HCT116 (cell line): ENCODE measurements at regions of chr5 and their contacts with region 1.

Region 1: GRCh38 chr5:923281-923873 is 30.7 kb downstream of the TRIP13 start:
- DNase-seq: peak; percentile 51
- ATAC-seq: peak; percentile 98
- H3K4me3 ChIP-seq: no peak overlapping the region
- H3K27ac ChIP-seq: no peak overlapping the region
- H3K4me1 ChIP-seq: 0 out of 4 replicates have a peak, but pooled peaks cover 0 to 3% of the 10 kb centered on the region in 2 experiments
- H3K27me3 ChIP-seq: no peaks in the 10 kb centered on the region
- CTCF ChIP-seq: peak; percentile 83 to 88 (median 86)
- POLR2A ChIP-seq: no peak
- RAD21 ChIP-seq: peak; percentile 95

Region 2: DNA sequence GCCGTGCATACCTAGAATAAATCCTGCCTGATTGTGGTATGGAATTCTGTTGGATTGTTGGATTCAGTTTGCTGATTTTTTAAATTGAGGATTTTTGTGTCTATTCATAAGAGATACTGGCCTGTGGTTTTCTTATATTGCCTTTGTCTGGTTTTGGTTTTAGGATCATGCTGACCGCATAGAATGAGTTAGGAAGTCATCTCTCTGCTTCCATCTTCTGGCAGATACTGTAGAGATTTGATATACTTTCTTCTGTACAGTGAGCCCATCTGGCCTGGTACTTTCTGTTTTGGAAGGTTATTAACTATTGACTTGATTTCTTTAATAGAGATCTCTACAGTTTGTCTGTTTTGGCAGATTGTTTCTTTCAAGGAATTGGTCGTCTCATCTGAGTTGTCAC is 296.5 kb before region 1 on chr5:
- CTCF ChIA-PET with region 1: no interaction called
- POLR2A ChIA-PET with region 1: no interaction called
- RAD21 ChIA-PET with region 1: no interaction called
- intact Hi-C with region 1: no loop called
- DNase-seq: no peak
- ATAC-seq: no peak
- H3K4me3 ChIP-seq: no peak overlapping the region
- H3K27ac ChIP-seq: no peak overlapping the region
- H3K4me1 ChIP-seq: no peaks in the 10 kb centered on the region
- H3K27me3 ChIP-seq: no peaks in the 10 kb centered on the region
- CTCF ChIP-seq: no peak
- POLR2A ChIP-seq: no peak
- RAD21 ChIP-seq: peak; percentile 14; the same call in 1 of the 2 replicates

Region 3: GRCh38 chr5:657570-657969 is 265.8 kb before region 1 on chr5:
- CTCF ChIA-PET with region 1: no interaction called
- POLR2A ChIA-PET with region 1: no interaction called
- RAD21 ChIA-PET with region 1: no interaction called
- intact Hi-C with region 1: no loop called
- DNase-seq: peak; percentile 23
- ATAC-seq: peak; percentile 86
- H3K4me3 ChIP-seq: no peak overlapping the region
- H3K27ac ChIP-seq: peak overlapping the region; percentile 44; the same call in 1 of the 2 replicates
- H3K4me1 ChIP-seq: peaks cover 3 to 13% of the 10 kb centered on the region in 2 experiments; a peak in 3 of 4 replicates
- H3K27me3 ChIP-seq: no peaks in the 10 kb centered on the region
- CTCF ChIP-seq: no peak
- POLR2A ChIP-seq: no peak
- RAD21 ChIP-seq: no peak

Region 4: DNA sequence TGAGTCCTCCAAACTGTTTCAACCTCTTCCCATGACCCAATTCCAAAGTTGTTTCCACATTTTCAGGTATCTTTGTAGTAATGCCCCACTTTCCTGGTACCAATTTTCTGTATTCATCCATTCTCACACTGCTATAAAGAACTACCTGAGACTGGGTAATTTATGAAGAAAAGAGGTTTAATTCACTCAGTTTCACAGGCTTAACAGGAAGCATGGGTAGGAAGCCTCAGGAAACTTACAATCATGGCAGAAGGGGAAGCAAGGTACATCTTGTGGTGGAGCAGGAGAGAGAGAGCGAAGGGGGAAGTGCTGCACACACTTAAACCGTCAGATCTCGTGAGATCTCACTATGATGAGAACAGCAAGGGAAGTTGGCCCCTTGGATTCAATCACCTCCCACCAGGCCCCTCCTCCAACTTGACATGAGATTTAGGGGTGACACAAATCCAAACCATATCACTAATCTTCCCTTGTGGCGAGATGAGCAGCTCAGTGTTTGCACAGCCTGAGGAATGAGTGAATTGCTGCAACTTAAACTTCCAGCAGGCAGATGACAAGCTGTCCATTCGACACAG is 12.2 kb after region 1 on chr5:
- CTCF ChIA-PET with region 1: interaction called, 11 read pairs
- POLR2A ChIA-PET with region 1: no interaction called
- RAD21 ChIA-PET with region 1: no interaction called
- intact Hi-C with region 1: no loop called
- DNase-seq: no peak
- ATAC-seq: no peak
- H3K4me3 ChIP-seq: no peak overlapping the region
- H3K27ac ChIP-seq: no peak overlapping the region
- H3K4me1 ChIP-seq: no peaks in the 10 kb centered on the region
- H3K27me3 ChIP-seq: peaks cover 15% of the 10 kb centered on the region; the same call in 1 of the 2 replicates
- CTCF ChIP-seq: no peak
- POLR2A ChIP-seq: no peak
- RAD21 ChIP-seq: no peak

Region 5: DNA sequence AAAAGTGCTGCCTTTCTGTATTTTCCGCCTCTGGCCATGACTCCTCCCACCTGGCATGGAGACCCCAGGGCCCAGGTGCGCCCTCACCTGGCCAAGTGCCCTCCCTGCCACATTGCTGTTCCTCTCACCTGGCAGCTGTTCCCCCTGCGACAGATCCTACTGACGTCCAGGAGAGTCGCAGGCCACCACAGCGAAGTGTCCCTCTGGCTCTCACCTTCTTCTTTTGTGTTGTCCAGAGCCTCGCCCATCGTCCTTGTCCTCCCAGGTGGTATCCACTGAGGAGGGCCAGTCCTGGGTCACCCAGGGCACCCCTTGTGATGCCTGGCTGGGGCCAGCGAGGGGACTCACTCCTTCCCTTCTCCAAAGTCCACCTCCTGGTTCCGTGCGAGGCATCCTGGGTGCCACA is 87.9 kb after region 1 on chr5:
- CTCF ChIA-PET with region 1: interaction called, 28 read pairs
- POLR2A ChIA-PET with region 1: interaction called, 3 read pairs
- RAD21 ChIA-PET with region 1: no interaction called
- intact Hi-C with region 1: loop called (anchors 1 kb)
- DNase-seq: no peak
- ATAC-seq: peak; percentile 70
- H3K4me3 ChIP-seq: no peak overlapping the region
- H3K27ac ChIP-seq: no peak overlapping the region
- H3K4me1 ChIP-seq: peaks cover 17 to 35% of the 10 kb centered on the region in 2 experiments
- H3K27me3 ChIP-seq: no peaks in the 10 kb centered on the region
- CTCF ChIP-seq: peak in 2 of 3 experiments; percentile 88 to 97; a peak in 4 of 6 replicates
- POLR2A ChIP-seq: no peak
- RAD21 ChIP-seq: no peak

Region 6: DNA sequence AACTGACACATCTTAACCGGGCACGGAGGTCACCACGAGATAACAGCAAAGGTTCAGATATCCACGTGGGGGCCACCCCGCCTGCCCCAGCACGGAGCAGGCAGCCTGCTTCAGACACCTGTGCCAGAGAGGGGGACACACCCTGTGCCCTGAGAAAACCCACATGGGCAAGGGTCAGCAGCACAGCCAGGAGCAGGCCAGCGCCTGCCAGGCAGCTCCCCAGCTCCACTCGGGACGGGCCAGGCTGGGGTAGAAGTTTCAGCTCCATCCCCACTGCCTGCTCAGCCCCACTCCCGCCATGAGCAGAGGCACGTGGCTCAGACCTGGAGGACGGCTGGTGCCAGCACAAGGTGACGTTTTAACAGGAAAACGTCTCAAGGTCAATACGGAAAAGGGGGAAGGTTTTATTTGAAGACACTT is 166.3 kb after region 1 on chr5:
- CTCF ChIA-PET with region 1: no interaction called
- POLR2A ChIA-PET with region 1: no interaction called
- RAD21 ChIA-PET with region 1: no interaction called
- intact Hi-C with region 1: no loop called
- DNase-seq: no peak
- ATAC-seq: no peak
- H3K4me3 ChIP-seq: no peak overlapping the region
- H3K27ac ChIP-seq: no peak overlapping the region
- H3K4me1 ChIP-seq: no peaks in the 10 kb centered on the region
- H3K27me3 ChIP-seq: no peaks in the 10 kb centered on the region
- CTCF ChIP-seq: no peak
- POLR2A ChIP-seq: no peak
- RAD21 ChIP-seq: no peak

Region 7: GRCh38 chr5:1140171-1140817 is 216.9 kb after region 1 on chr5:
- CTCF ChIA-PET with region 1: interaction called, 8 read pairs
- POLR2A ChIA-PET with region 1: no interaction called
- RAD21 ChIA-PET with region 1: no interaction called
- intact Hi-C with region 1: loop called (anchors 1 kb)
- DNase-seq: peak; percentile 34
- ATAC-seq: peak; percentile 88
- H3K4me3 ChIP-seq: no peak overlapping the region
- H3K27ac ChIP-seq: no peak overlapping the region
- H3K4me1 ChIP-seq: peaks cover 0 to 3% of the 10 kb centered on the region in 2 experiments; a peak in 1 of 4 replicates
- H3K27me3 ChIP-seq: no peaks in the 10 kb centered on the region
- CTCF ChIP-seq: peak; percentile 72 to 78 (median 74); a peak in 5 of 6 replicates
- POLR2A ChIP-seq: no peak
- RAD21 ChIP-seq: peak; percentile 82

Region 8: GRCh38 chr5:1641560-1642166 is 718.3 kb after region 1 on chr5:
- CTCF ChIA-PET with region 1: no interaction called
- POLR2A ChIA-PET with region 1: no interaction called
- RAD21 ChIA-PET with region 1: no interaction called
- intact Hi-C with region 1: loop called (anchors 5 kb)
- DNase-seq: peak; percentile 83
- ATAC-seq: peak; percentile 86
- H3K4me3 ChIP-seq: no peak overlapping the region
- H3K27ac ChIP-seq: no peak overlapping the region
- H3K4me1 ChIP-seq: peaks cover 0 to 7% of the 10 kb centered on the region in 2 experiments; a peak in 2 of 4 replicates
- H3K27me3 ChIP-seq: peaks cover 9% of the 10 kb centered on the region; the same call in 1 of the 2 replicates
- CTCF ChIP-seq: peak; percentile 98 to 99 (median 98)
- POLR2A ChIP-seq: no peak
- RAD21 ChIP-seq: peak; percentile 80